ENCODE measurements at regions of chr20 and their contacts with region 1.

Region 1: GRCh38 chr20:44115762-44116644 is 71.0 kb downstream of the JPH2 start:
- DNase-seq: no peak
- H3K4me3 ChIP-seq: no peak overlapping the region
- H3K4me1 ChIP-seq: no peaks in the 10 kb centered on the region
- H3K27me3 ChIP-seq: peaks cover 4% of the 10 kb centered on the region; the same call in 1 of the 2 replicates

Region 2: DNA sequence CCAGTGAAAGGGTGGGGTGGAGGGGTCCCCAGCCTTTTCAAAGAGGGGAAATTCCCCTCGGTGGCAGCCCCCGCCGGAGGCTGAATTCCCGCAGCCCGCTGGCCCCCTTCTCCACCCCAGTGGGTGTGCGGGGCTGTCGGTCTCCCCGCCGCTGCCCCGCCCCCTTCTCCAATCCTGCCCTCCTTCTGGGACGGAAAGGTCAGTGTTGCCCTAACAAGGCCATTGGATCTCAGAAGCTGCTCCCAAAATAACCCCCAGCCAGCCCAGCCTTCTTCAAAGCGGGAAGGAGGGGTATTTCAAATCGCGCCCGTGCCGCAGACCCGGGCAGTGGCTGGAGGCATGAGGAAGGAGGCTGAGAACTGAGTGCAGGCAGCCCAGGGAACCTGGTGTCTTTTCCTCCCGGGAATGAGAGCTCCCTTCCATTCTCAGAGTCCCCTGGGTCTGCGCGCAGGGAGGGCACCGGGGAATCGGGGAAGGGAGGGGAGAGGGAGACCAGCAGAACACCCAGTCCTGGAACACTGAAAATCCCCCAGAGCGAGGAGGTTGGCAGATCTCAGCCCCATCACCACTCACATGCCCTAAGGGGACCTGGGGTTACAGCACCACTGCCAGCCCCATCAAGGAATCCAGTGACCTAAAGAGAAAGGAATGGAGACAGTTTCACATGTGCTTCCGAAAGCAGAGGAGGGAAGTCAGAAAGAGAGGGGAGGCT is 71.2 kb after region 1 on chr20 and contains the start of gene JPH2:
- in situ Hi-C with region 1: loop called (anchors 5 kb)
- DNase-seq: peak in 1 of 2 experiments; percentile 29
- H3K4me3 ChIP-seq: no peak within 1 kb of the TSS
- H3K4me1 ChIP-seq: no peaks in the 10 kb centered on the region
- H3K27me3 ChIP-seq: peaks cover 8% of the 10 kb centered on the region

Measured in HAP-1 (cell line).